Kidney (tissue), 22 donors: ENCODE measurements at regions of chr18 and their contacts with region 1.

Region 1: GRCh38 chr18:30186245-30186644 is 856.3 kb downstream of the DSC3 start:
- DNase-seq: no peak
- H3K4me3 ChIP-seq: no peak overlapping the region
- H3K27ac ChIP-seq: no peak overlapping the region
- H3K4me1 ChIP-seq: no peaks in the 10 kb centered on the region
- H3K27me3 ChIP-seq: no peaks in the 10 kb centered on the region
- CTCF ChIP-seq: no peak

Region 2: DNA sequence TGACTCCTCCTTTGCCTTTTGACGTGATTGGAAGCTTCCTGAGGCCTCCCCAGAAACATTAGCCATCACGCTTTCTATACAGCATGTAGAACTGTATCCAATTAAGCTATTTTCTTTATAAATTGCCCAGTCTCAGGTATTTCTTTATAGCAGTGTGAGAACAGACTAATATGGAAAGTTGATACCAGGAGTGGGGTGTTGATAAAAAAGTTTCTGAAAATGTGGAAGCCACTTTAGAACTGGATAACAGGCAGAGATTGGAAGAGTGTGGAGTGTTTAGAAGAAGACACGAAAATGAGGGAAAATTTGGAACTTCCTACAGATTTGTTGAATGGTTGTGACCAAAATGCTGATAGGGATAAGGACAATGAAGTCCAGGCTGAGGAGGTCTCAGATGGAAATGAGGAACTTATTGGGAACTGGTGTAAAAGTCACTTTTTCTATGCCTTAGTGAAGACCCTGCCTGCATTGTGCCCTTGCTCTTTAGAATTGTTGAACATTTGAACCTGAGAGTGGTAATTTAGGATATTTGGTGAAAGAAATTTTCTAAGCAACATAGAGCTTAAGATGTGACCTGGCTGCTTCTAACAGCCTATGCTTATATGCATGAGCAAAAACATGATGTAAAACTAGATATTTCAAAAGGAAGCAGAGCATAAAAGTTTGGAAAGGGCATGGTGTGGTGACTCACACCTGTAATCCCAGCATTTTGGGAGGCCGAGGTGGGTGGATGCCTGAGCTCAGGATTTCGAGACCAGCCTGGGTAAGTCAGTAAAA is 113.4 kb before region 1 on chr18:
- intact Hi-C with region 1: no loop called
- DNase-seq: no peak
- H3K4me3 ChIP-seq: no peak overlapping the region
- H3K27ac ChIP-seq: no peak overlapping the region
- H3K4me1 ChIP-seq: no peaks in the 10 kb centered on the region
- H3K27me3 ChIP-seq: no peaks in the 10 kb centered on the region
- CTCF ChIP-seq: no peak

Region 3: DNA sequence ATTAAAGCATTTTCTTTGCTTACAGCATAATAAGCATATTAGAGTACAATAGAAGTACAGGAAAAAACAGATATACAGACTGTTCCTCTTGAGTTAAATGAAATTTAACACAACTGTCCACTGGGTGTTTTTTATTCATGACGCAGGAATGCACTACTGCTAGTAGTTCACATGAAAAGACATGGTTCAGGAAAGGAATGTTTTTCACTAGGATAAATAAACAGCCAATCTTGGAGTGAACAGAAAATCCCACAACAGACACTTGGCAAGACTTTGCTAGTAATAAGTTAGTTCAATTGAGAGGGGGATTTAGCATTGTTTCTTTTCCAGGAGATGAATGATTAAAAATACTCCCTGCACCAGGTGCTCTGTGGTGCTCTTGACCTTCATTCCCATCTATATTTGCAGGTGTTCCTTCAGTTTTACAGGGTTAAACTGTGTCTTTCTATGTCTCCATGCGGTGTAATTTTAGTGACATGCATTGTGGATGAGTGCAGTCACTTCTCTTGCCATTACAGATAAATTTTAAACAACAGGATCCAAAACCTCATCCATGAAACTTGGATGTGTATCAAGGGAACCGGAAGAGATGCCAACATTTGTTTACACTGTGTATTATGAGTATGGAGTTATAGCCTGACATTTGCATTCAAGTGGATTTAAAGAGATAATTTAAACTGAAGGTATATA is 59.7 kb after region 1 on chr18:
- intact Hi-C with region 1: loop called (anchors 10 kb)
- DNase-seq: peak in 2 of 5 donors; percentile 30 to 61
- H3K4me3 ChIP-seq: no peak overlapping the region
- H3K27ac ChIP-seq: no peak overlapping the region
- H3K4me1 ChIP-seq: no peaks in the 10 kb centered on the region
- H3K27me3 ChIP-seq: no peaks in the 10 kb centered on the region
- CTCF ChIP-seq: no peak